H1 (cell line): ENCODE measurements at regions of chr11 and their contacts with region 1.

Region 1: DNA sequence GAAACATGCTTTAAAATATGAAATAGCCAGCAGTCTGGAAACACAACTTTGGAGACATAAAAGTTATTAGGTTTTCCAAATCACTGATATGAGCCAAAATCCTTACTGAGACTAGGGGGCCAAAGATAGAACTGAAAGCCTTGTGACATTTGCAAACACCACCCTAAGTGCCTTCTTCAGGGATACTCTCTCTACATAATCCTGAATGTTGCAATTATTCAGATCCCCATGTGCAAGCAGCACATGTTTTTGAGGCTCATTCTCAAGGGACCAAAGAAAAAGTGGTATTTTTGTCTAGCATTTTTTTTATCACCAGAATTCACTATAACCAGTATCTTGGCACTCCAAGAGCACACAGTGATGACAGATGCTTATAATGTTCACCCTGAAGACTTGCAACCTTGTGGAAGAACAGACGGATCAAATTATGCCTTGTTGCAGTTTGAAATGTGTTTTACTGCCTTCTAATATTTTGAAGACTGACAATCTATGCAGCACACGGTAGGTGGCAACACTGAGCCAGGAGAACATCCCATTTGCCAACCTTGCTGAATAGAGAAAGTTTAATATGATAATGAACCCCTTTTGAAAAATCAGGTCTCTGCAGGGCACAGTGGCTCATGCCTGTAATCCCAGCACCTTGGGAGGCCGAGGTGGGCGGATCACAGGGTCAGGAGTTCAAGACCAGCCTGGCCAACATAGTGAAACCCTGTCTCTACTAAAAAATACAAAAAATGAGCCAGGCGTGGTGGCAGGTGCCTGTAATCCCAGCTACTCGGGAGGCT is 78.5 kb downstream of the PLEKHA7 start:
- DNase-seq: no peak
- H3K4me3 ChIP-seq: no peak overlapping the region
- H3K27ac ChIP-seq: no peak overlapping the region
- H3K4me1 ChIP-seq: peaks cover 0 to 3% (median 0%) of the 10 kb centered on the region in 4 experiments; a peak in 2 of 7 replicates
- H3K27me3 ChIP-seq: no peaks in the 10 kb centered on the region
- CTCF ChIP-seq: peak in 2 of 3 experiments; percentile 73 to 74; a peak in 3 of 4 replicates
- EP300 ChIP-seq: no peak
- POLR2A ChIP-seq: no peak
- RAD21 ChIP-seq: peak; percentile 80 to 84

Region 2: DNA sequence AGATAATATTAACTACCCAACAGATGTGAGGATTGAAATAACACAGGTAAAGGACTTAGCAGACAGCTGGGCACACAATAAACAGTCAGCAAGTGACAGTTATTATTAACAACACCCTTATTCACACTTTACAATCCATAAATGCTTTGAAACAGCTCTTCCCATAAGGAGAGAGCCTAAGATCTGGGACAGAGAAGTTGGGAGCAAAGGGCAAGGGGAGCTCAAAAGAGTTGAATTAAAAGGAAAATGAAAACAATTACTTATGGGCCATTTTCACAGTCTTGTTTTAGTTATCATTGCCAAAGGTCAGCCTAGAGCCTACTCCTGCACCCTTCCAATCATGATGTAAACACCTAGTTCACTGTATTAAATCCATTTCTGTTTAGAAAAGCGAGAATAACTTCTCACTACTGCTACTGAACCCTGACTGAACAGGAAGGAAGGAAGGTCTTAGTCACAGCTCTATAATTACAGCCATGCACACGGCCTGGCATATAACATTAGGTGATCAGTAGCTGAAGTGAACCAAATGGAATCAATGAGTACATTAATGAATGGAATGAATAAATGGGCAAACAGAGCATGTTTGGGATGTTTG is 32.8 kb before region 1 on chr11:
- CTCF ChIA-PET with region 1: interaction called, 12 read pairs
- POLR2A ChIA-PET with region 1: no interaction called
- DNase-seq: no peak
- H3K4me3 ChIP-seq: no peak overlapping the region
- H3K27ac ChIP-seq: no peak overlapping the region
- H3K4me1 ChIP-seq: peaks cover 0 to 12% (median 6%) of the 10 kb centered on the region in 4 experiments; a peak in 4 of 7 replicates
- H3K27me3 ChIP-seq: no peaks in the 10 kb centered on the region
- CTCF ChIP-seq: no peak
- EP300 ChIP-seq: no peak
- POLR2A ChIP-seq: no peak
- RAD21 ChIP-seq: no peak

Region 3: DNA sequence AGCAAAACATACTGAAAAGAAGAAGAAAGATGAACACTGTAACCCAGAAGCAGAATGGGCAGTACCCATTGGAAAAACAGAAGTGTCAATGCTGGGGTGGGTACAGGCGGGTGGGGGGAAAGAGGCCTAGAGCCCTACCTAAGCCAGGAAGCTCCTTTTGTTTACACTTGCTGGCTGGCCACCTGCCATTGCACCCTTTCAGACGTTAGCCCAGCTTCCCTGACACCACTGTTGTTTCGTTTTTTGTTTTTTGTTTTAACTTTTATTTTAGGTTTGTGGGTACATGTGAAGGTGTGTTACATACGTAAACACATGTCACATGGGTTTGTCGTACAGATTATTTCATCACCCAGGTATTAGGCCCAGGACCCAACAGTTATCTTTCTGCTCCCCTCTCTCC is 23.1 kb after region 1 on chr11:
- CTCF ChIA-PET with region 1: no interaction called
- POLR2A ChIA-PET with region 1: no interaction called
- DNase-seq: no peak
- H3K4me3 ChIP-seq: no peak overlapping the region
- H3K27ac ChIP-seq: no peak overlapping the region
- H3K4me1 ChIP-seq: peaks cover 11 to 20% (median 14%) of the 10 kb centered on the region in 4 experiments
- H3K27me3 ChIP-seq: no peaks in the 10 kb centered on the region
- CTCF ChIP-seq: no peak
- EP300 ChIP-seq: no peak
- POLR2A ChIP-seq: no peak
- RAD21 ChIP-seq: no peak

Region 4: DNA sequence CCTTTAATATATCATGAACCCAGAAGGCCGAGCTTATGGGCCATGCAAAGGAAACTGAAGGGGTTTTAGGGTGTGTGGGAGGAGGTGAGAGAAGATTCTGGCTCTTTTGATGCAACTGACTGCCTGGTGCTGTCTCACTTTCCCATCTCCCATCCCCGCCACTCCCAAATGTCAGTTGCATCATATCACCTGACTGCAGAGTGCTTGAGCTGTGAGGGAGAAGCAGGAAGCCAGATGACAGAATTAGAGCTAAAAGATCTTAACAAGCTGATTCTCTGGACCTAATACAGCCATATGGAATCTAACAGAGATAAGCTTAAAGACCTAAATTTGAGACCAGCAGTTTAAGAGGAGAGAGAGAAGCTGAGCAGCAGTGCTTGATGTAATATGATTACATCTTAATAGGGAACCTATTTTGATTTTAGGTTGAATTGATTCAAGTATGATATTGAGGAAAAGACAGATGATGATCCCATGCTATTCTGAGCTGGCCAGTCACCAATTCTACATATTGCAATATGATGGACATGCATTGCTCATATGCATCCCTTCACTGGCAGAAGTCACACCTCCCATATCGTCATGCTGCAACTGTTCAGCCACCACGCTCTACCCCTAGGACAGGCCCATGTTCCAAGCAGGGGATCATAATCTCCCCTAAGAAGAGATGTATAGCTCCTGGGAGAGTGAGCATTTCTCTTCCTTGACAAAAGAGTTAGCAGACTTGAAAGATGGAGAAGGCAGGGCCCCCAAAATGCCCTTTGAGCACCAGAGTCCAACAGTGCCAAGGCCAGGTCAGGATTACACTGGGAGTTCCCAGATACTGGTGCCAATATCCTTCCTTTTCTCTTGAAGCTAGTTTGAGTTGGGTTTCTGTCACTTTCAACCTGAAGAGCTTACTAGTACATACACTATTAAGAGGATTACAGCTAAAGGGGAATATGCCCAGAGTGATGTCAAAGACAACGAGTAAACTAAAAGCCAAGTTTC is 33.6 kb after region 1 on chr11:
- CTCF ChIA-PET with region 1: no interaction called
- POLR2A ChIA-PET with region 1: no interaction called
- DNase-seq: no peak
- H3K4me3 ChIP-seq: no peak overlapping the region
- H3K27ac ChIP-seq: no peak overlapping the region
- H3K4me1 ChIP-seq: 0 out of 7 replicates have a peak, but pooled peaks cover 0 to 4% (median 0%) of the 10 kb centered on the region in 4 experiments
- H3K27me3 ChIP-seq: no peaks in the 10 kb centered on the region
- CTCF ChIP-seq: no peak
- EP300 ChIP-seq: no peak
- POLR2A ChIP-seq: no peak
- RAD21 ChIP-seq: no peak

Region 5: DNA sequence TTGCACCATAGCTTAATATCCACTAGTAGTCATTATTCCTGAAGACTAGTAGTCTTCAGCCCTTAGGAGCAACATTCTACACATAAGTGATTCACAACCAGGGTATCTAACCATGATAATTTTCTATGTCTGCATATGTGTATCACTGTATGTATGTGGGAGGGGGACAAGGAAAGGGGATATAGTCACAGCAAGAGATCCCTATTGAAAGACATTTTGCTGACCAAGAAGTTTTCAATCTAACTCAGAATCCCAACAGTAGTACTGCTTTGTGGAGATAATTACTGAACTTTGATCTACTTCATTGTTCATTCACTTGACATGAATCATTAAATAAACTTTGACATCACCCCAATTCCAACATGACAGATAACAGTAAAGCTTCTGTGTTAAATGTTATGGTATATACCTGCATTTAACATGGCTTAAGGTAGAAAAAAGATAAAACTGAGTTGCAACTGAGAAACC is 261.8 kb after region 1 on chr11:
- CTCF ChIA-PET with region 1: no interaction called
- POLR2A ChIA-PET with region 1: no interaction called
- DNase-seq: no peak
- H3K4me3 ChIP-seq: no peak overlapping the region
- H3K27ac ChIP-seq: no peak overlapping the region
- H3K4me1 ChIP-seq: 0 out of 7 replicates have a peak, but pooled peaks cover 0 to 2% (median 0%) of the 10 kb centered on the region in 4 experiments
- H3K27me3 ChIP-seq: no peaks in the 10 kb centered on the region
- CTCF ChIP-seq: no peak
- EP300 ChIP-seq: no peak
- POLR2A ChIP-seq: no peak
- RAD21 ChIP-seq: no peak